B cell (primary cell): ENCODE measurements at regions of chr22 and their contacts with region 1.

Region 1: DNA sequence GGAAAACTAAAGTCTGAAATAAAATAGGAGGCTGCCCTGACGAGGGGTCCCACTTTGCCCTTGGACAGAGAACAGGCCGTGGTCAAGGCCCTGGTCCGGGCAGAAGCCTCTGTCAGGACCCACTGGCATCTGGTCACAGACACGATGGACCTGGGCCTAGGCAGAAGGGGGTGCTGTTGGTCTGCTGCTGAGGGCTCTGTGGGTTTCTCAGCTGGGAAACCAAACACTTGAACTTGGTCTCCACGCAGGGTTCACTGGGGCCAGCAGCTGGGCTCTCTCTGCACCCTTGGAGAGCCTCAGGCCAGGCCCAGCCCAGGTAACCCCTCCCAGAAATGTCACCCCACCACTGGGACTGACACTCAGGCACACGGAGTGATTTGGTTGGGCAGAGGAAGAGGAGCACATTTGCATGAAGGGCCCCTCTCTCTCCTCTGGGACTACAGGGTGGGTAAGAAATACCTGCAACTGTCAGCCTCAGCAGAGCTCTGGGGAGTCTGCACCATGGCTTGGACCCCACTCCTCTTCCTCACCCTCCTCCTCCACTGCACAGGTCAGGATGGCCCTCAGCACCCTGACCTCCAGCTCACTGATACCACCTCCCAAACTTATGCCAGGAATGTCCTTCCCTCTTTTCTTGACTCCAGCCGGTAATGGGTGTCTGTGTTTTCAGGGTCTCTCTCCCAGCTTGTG is 48.1 kb upstream of the TOP3B start:
- DNase-seq: peak; percentile 80
- ATAC-seq: peak; percentile 80
- H3K4me3 ChIP-seq: peak overlapping the region in 4 of 5 experiments; percentile 31 to 51 (median 45)
- H3K4me3 Mint-ChIP-seq: peak overlapping the region; percentile 91
- H3K27ac ChIP-seq: peak overlapping the region; percentile 70 to 75
- H3K27ac Mint-ChIP-seq: peak overlapping the region; percentile 97
- H3K4me1 ChIP-seq: peaks cover 56 to 69% of the 10 kb centered on the region in 2 donors
- H3K4me1 Mint-ChIP-seq: peaks cover 77% of the 10 kb centered on the region
- H3K27me3 ChIP-seq: no peaks in the 10 kb centered on the region
- H3K27me3 Mint-ChIP-seq: no peaks in the 10 kb centered on the region
- CTCF ChIP-seq: peak; percentile 67

Region 2: GRCh38 chr22:21982338-21982965 is 48.2 kb before region 1 on chr22 and contains the start of gene TOP3B:
- CTCF ChIA-PET with region 1: interaction called, 4 read pairs
- POLR2A ChIA-PET with region 1: interaction called, 3 read pairs
- intact Hi-C with region 1: loop called (anchors 5 kb)
- DNase-seq: peak; percentile 85
- ATAC-seq: peak; percentile 94
- H3K4me3 ChIP-seq: peak within 1 kb of the TSS; percentile 45 to 94 (median 89)
- H3K4me3 Mint-ChIP-seq: peak within 1 kb of the TSS; percentile 91
- H3K27ac ChIP-seq: peak within 1 kb of the TSS; percentile 55 to 87
- H3K27ac Mint-ChIP-seq: peak within 1 kb of the TSS; percentile 94
- H3K4me1 ChIP-seq: peaks cover 14 to 18% of the 10 kb centered on the region in 2 donors
- H3K4me1 Mint-ChIP-seq: peaks cover 40% of the 10 kb centered on the region
- H3K27me3 ChIP-seq: no peaks in the 10 kb centered on the region
- H3K27me3 Mint-ChIP-seq: no peaks in the 10 kb centered on the region
- CTCF ChIP-seq: no peak
- total RNA-seq, gene TOP3B: 103 and 105 TPM in 2 replicates

Region 3: DNA sequence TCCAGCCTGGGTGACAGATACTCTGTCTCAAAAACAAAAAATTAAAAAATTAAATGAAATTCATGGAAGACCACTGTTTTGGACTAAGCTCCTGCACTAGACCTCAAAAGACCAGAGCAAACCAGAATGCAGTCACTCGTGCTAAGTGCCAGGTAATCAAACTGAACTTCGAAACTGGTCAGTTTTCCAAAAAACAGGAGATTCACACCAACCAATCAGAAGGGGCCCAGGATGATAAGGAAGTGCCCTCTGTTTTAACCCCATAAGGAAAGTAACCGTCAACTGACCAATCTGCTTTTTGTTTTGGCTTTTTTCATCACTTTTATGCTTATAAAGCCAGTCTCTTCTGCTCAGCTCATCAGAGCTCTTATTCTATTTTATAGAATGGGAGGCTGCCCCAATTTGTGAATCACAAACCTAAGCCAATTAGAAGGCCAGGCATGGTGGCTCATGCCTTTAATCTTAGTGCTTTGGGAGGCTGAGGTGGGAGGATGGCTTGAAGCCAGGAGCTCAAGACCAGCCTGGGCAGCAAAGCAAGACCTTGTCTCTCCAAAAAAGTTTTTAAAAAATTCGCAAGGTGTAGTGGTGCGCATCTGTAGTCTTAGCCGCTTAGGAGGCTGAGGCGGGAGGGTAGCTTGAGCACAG is 37.9 kb before region 1 on chr22:
- CTCF ChIA-PET with region 1: no interaction called
- POLR2A ChIA-PET with region 1: no interaction called
- intact Hi-C with region 1: no loop called
- DNase-seq: no peak
- ATAC-seq: no peak
- H3K4me3 ChIP-seq: no peak overlapping the region
- H3K4me3 Mint-ChIP-seq: no peak overlapping the region
- H3K27ac ChIP-seq: no peak overlapping the region
- H3K27ac Mint-ChIP-seq: no peak overlapping the region
- H3K4me1 ChIP-seq: no peaks in the 10 kb centered on the region
- H3K4me1 Mint-ChIP-seq: no peaks in the 10 kb centered on the region
- H3K27me3 ChIP-seq: no peaks in the 10 kb centered on the region
- H3K27me3 Mint-ChIP-seq: no peaks in the 10 kb centered on the region
- CTCF ChIP-seq: no peak

Region 4: GRCh38 chr22:22099833-22100812 is 69.5 kb after region 1 on chr22:
- CTCF ChIA-PET with region 1: interaction called, 34 read pairs
- POLR2A ChIA-PET with region 1: interaction called, 8 read pairs
- intact Hi-C with region 1: no loop called
- DNase-seq: peak; percentile 49
- ATAC-seq: peak; percentile 32
- H3K4me3 ChIP-seq: no peak overlapping the region
- H3K4me3 Mint-ChIP-seq: peak overlapping the region; percentile 60
- H3K27ac ChIP-seq: peak overlapping the region; percentile 91 to 93
- H3K27ac Mint-ChIP-seq: peak overlapping the region; percentile 97
- H3K4me1 ChIP-seq: peaks cover 33 to 36% of the 10 kb centered on the region in 2 donors
- H3K4me1 Mint-ChIP-seq: peaks cover 53% of the 10 kb centered on the region
- H3K27me3 ChIP-seq: no peaks in the 10 kb centered on the region
- H3K27me3 Mint-ChIP-seq: no peaks in the 10 kb centered on the region
- CTCF ChIP-seq: peak; percentile 39

Region 5: GRCh38 chr22:22168190-22168940 is 137.7 kb after region 1 on chr22:
- CTCF ChIA-PET with region 1: interaction called, 15 read pairs
- POLR2A ChIA-PET with region 1: interaction called, 3 read pairs
- intact Hi-C with region 1: no loop called
- DNase-seq: peak; percentile 74
- ATAC-seq: peak; percentile 55
- H3K4me3 ChIP-seq: peak overlapping the region; percentile 20 to 59 (median 40)
- H3K4me3 Mint-ChIP-seq: peak overlapping the region; percentile 92
- H3K27ac ChIP-seq: peak overlapping the region; percentile 96 to 98
- H3K27ac Mint-ChIP-seq: peak overlapping the region; percentile 100
- H3K4me1 ChIP-seq: peaks cover 80 to 88% of the 10 kb centered on the region in 2 donors
- H3K4me1 Mint-ChIP-seq: peaks cover 81% of the 10 kb centered on the region
- H3K27me3 ChIP-seq: no peaks in the 10 kb centered on the region
- H3K27me3 Mint-ChIP-seq: no peaks in the 10 kb centered on the region
- CTCF ChIP-seq: no peak

Region 6: DNA sequence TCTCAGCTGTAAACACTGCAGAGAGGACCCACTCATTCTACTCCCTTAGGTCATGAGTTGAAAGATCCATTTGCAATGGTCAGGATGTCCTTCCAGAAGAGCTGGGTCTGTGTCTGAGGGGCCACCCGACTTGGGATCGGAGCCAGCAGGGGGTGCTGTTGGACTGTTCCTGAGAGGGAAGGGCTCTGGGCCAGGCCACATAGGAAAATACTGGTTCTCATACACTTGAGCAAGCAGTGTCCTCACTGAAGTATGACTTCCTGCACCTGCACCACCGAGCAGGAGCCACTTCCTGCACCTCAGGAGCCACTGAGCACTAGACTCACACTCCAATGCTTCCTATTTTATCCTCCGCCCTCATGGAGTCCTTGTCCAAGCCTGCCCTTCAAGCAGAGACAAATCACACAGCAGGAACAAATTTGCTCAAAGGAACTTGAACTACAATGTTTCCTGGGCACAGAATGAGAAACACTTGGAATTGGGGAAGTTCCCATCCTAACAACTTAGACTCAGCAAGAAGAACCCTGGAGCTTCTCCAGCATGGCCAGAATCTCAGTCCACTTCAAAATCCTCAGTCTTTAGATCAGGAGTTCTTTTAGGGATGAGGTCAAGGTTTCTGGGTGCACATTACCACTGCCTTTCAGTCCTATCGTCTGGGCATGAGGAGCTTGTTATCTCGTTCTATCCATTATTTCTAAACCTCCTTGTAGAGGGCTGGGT is 177.4 kb after region 1 on chr22:
- CTCF ChIA-PET with region 1: interaction called, 21 read pairs
- POLR2A ChIA-PET with region 1: no interaction called
- intact Hi-C with region 1: no loop called
- DNase-seq: peak; percentile 90
- ATAC-seq: peak; percentile 85
- H3K4me3 ChIP-seq: peak overlapping the region in 1 of 5 experiments; percentile 12
- H3K4me3 Mint-ChIP-seq: peak overlapping the region; percentile 67
- H3K27ac ChIP-seq: peak overlapping the region; percentile 45 to 51
- H3K27ac Mint-ChIP-seq: peak overlapping the region; percentile 93
- H3K4me1 ChIP-seq: peaks cover 53 to 57% of the 10 kb centered on the region in 2 donors
- H3K4me1 Mint-ChIP-seq: peaks cover 54% of the 10 kb centered on the region
- H3K27me3 ChIP-seq: no peaks in the 10 kb centered on the region
- H3K27me3 Mint-ChIP-seq: no peaks in the 10 kb centered on the region
- CTCF ChIP-seq: peak; percentile 89

Region 7: DNA sequence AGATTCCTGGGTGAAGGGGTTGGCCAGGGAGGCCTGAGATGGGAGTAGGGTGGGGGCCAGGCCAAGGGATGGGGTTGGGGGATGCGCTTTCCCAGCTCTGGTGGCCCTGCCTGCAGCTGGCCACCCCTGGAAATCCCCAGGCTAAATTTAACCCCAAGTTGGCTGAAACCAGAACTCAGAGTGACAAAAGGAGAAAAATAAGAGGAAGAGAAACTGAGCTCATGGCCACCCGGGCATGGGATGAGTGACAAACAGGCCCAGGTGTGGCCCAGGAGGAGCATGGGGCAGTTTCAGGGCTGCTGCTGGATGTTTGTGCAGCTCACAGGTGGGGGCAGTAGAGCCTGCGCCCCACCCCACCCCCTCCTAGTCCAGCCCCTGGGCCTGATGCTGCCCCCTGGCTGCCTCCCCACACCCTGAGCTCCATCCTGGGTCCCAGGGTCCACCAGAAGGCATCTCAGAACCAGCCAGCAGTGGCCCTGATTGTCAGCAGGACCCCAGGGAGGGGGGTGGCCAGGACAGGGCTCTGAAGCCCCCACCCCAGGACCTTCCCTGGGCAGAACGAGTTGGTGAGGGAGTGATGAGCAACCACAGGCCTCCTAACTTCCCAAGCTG is 905.0 kb after region 1 on chr22:
- CTCF ChIA-PET with region 1: interaction called, 5 read pairs
- POLR2A ChIA-PET with region 1: no interaction called
- intact Hi-C with region 1: loop called (anchors 10 kb)
- DNase-seq: peak; percentile 97
- ATAC-seq: peak; percentile 89
- H3K4me3 ChIP-seq: peak overlapping the region in 2 of 5 experiments; percentile 7 to 37
- H3K4me3 Mint-ChIP-seq: peak overlapping the region; percentile 71
- H3K27ac ChIP-seq: peak overlapping the region; percentile 94 to 99
- H3K27ac Mint-ChIP-seq: peak overlapping the region; percentile 95
- H3K4me1 ChIP-seq: peaks cover 98 to 100% of the 10 kb centered on the region in 2 donors
- H3K4me1 Mint-ChIP-seq: peaks cover 98% of the 10 kb centered on the region
- H3K27me3 ChIP-seq: no peaks in the 10 kb centered on the region
- H3K27me3 Mint-ChIP-seq: no peaks in the 10 kb centered on the region
- CTCF ChIP-seq: peak; percentile 75